Naive thymus-derived CD4-positive, alpha-beta T cell (primary cell): ENCODE measurements at regions of chr6 and their contacts with region 1.

Region 1: DNA sequence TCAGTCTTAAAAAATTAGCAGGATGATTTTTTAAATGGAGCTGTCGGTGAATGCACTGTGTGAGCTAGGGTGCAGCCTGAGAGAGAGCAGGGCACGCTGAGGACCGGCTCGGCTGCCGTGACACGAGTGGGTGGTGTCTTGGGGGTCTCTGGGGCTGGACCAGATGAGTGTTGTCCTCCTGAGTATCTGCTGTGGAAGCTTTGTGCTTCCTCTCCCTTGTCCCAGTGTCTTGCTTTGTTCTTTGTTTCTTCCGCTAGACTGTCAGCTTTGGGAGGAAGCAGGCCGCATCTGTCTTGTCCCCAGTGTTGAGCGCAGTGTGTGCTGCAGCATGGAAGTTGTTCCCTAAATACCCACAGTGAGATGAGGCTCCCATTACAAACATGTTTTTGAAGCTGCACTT is 89.4 kb downstream of the RTN4IP1 start:
- DNase-seq: no peak
- ATAC-seq: peak; percentile 47
- H3K4me3 ChIP-seq: no peak overlapping the region
- H3K4me3 Mint-ChIP-seq: peak overlapping the region in 1 of 10 donors; percentile 18
- H3K27ac ChIP-seq: no peak overlapping the region
- H3K27ac Mint-ChIP-seq: peak overlapping the region in 8 of 9 donors; percentile 10 to 85 (median 54)
- H3K4me1 ChIP-seq: peaks cover 19 to 20% of the 10 kb centered on the region in 2 donors
- H3K4me1 Mint-ChIP-seq: peaks cover 27 to 58% (median 46%) of the 10 kb centered on the region in 7 donors
- H3K27me3 ChIP-seq: no peaks in the 10 kb centered on the region
- H3K27me3 Mint-ChIP-seq: no peaks in the 10 kb centered on the region

Region 2: GRCh38 chr6:106525111-106525881 is 14.6 kb before region 1 on chr6:
- CTCF ChIA-PET with region 1: interaction called, 3 read pairs
- POLR2A ChIA-PET with region 1: interaction called, 12 read pairs
- intact Hi-C with region 1: loop called in 1 of 2 experiments (anchors 1 kb)
- DNase-seq: peak in 7 of 9 donors; percentile 43 to 65 (median 57)
- ATAC-seq: peak; percentile 21
- H3K4me3 ChIP-seq: peak overlapping the region; percentile 57
- H3K4me3 Mint-ChIP-seq: peak overlapping the region; percentile 80 to 96 (median 91)
- H3K27ac ChIP-seq: peak overlapping the region; percentile 86
- H3K27ac Mint-ChIP-seq: peak overlapping the region; percentile 92 to 98 (median 94)
- H3K4me1 ChIP-seq: peaks cover 11 to 13% of the 10 kb centered on the region in 2 donors
- H3K4me1 Mint-ChIP-seq: peaks cover 24 to 79% (median 63%) of the 10 kb centered on the region in 7 donors
- H3K27me3 ChIP-seq: no peaks in the 10 kb centered on the region
- H3K27me3 Mint-ChIP-seq: no peaks in the 10 kb centered on the region